CD14-positive monocyte (primary cell): ENCODE measurements at regions of chr17 and their contacts with region 1.

Region 1: GRCh38 chr17:1365445-1366039 is 34.5 kb downstream of the YWHAE start:
- DNase-seq: peak; percentile 61 to 75 (median 74)
- H3K4me3 ChIP-seq: no peak overlapping the region
- H3K4me3 Mint-ChIP-seq: no peak overlapping the region
- H3K27ac ChIP-seq: no peak overlapping the region
- H3K27ac Mint-ChIP-seq: peak overlapping the region in 2 of 7 donors; percentile 26 to 70
- H3K4me1 ChIP-seq: peaks cover 47 to 53% of the 10 kb centered on the region in 2 donors
- H3K4me1 Mint-ChIP-seq: peaks cover 64% of the 10 kb centered on the region
- H3K27me3 ChIP-seq: no peaks in the 10 kb centered on the region
- H3K27me3 Mint-ChIP-seq: peaks cover 0 to 2% (median 0%) of the 10 kb centered on the region in 3 donors
- CTCF ChIP-seq: peak; percentile 85

Region 2: DNA sequence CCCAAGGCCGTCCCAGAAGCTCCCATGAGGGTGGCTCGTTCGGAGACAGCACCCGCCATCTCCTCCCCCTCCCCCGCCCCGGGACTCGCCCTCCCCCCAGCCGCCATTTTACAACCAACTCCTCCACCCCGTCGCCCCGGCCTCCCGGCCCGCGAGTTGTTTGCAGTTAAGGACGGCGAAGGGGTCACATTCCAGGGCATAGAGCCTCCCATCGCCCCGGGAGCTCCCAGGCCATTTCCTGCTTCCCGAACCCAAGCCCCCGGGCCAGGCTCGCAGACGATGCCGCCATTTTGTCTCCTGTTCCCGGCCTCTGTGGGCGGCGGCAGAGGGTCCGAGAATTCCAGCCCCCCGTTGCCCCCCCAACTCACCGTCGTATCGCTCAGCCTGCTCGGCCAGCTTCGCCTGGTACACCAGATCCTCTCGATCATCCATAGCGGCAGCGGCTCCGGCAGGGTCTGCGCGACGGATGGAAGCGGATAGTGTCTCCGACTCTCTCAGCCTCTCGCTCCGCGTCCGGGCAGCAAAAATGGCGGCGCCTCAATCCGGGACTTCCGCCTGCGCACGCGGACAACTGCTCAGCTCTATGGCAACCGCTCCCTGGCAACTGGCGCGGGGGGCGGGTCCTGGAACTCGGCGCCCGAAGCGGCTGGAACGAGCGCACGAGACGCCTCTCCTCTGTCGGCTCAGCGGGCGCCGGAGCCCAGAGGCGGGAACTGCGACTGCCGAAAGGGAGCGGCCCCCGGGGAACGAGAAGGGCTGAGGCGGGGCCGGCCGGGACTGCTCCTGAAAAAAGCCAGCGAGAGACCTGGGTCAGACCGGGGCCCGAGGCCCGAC is 34.4 kb after region 1 on chr17 and contains the start of gene YWHAE:
- intact Hi-C with region 1: loop called (anchors 5 kb)
- DNase-seq: peak; percentile 92 to 96 (median 96)
- H3K4me3 ChIP-seq: peak within 1 kb of the TSS; percentile 81 to 100 (median 85)
- H3K4me3 Mint-ChIP-seq: peak within 1 kb of the TSS; percentile 96 to 97
- H3K27ac ChIP-seq: peak within 1 kb of the TSS; percentile 86 to 91
- H3K27ac Mint-ChIP-seq: peak within 1 kb of the TSS; percentile 97 to 99 (median 99)
- H3K4me1 ChIP-seq: peaks cover 35 to 41% of the 10 kb centered on the region in 2 donors
- H3K4me1 Mint-ChIP-seq: peaks cover 42% of the 10 kb centered on the region
- H3K27me3 ChIP-seq: no peaks in the 10 kb centered on the region
- H3K27me3 Mint-ChIP-seq: peaks cover 2 to 9% (median 3%) of the 10 kb centered on the region in 3 donors
- CTCF ChIP-seq: no peak
- polyA plus RNA-seq, gene YWHAE: 165 to 185 (median 168) TPM

Region 3: GRCh38 chr17:1455797-1456599 is 90.5 kb after region 1 on chr17 and contains the start of gene CRK:
- intact Hi-C with region 1: loop called in 1 of 2 experiments (anchors 10 kb)
- DNase-seq: peak; percentile 96 to 97 (median 96)
- H3K4me3 ChIP-seq: peak within 1 kb of the TSS; percentile 87 to 98 (median 91)
- H3K4me3 Mint-ChIP-seq: peak within 1 kb of the TSS; percentile 95 to 96
- H3K27ac ChIP-seq: peak within 1 kb of the TSS; percentile 87 to 96
- H3K27ac Mint-ChIP-seq: peak within 1 kb of the TSS; percentile 83 to 97 (median 93)
- H3K4me1 ChIP-seq: peaks cover 36 to 51% of the 10 kb centered on the region in 2 donors
- H3K4me1 Mint-ChIP-seq: peaks cover 54% of the 10 kb centered on the region
- H3K27me3 ChIP-seq: peaks cover 2 to 22% of the 10 kb centered on the region in 2 donors
- H3K27me3 Mint-ChIP-seq: peaks cover 30 to 42% (median 41%) of the 10 kb centered on the region in 3 donors
- CTCF ChIP-seq: no peak
- polyA plus RNA-seq, gene CRK: 22.3 to 28.0 (median 26.5) TPM

Region 4: GRCh38 chr17:1516388-1517161 is 151.0 kb after region 1 on chr17 and contains the start of gene INPP5K:
- intact Hi-C with region 1: loop called (anchors 2 kb)
- DNase-seq: peak; percentile 98 to 99 (median 99)
- H3K4me3 ChIP-seq: peak within 1 kb of the TSS; percentile 73 to 99 (median 87)
- H3K4me3 Mint-ChIP-seq: peak within 1 kb of the TSS; percentile 90 to 94
- H3K27ac ChIP-seq: peak within 1 kb of the TSS; percentile 54 to 95
- H3K27ac Mint-ChIP-seq: peak within 1 kb of the TSS; percentile 91 to 95 (median 93)
- H3K4me1 ChIP-seq: peaks cover 22 to 29% of the 10 kb centered on the region in 2 donors
- H3K4me1 Mint-ChIP-seq: peaks cover 18% of the 10 kb centered on the region
- H3K27me3 ChIP-seq: no peaks in the 10 kb centered on the region
- H3K27me3 Mint-ChIP-seq: no peaks in the 10 kb centered on the region
- CTCF ChIP-seq: no peak
- polyA plus RNA-seq, gene INPP5K: 50.3 to 58.7 (median 53.0) TPM

Region 5: GRCh38 chr17:1532836-1533602 is 167.5 kb after region 1 on chr17:
- intact Hi-C with region 1: loop called in 1 of 2 experiments (anchors 5 kb)
- DNase-seq: peak; percentile 41 to 51 (median 48)
- H3K4me3 ChIP-seq: no peak overlapping the region
- H3K4me3 Mint-ChIP-seq: no peak overlapping the region
- H3K27ac ChIP-seq: peak overlapping the region in 1 of 2 donors; percentile 20
- H3K27ac Mint-ChIP-seq: peak overlapping the region in 3 of 7 donors; percentile 24 to 66 (median 26)
- H3K4me1 ChIP-seq: no peaks in the 10 kb centered on the region
- H3K4me1 Mint-ChIP-seq: peaks cover 6% of the 10 kb centered on the region
- H3K27me3 ChIP-seq: no peaks in the 10 kb centered on the region
- H3K27me3 Mint-ChIP-seq: peaks cover 0 to 3% (median 2%) of the 10 kb centered on the region in 3 donors
- CTCF ChIP-seq: peak; percentile 69